ENCODE measurements at regions of chr1 and their contacts with region 1.

Region 1: GRCh38 chr1:236699366-236699765 is 13.1 kb downstream of the ACTN2 start:
- DNase-seq: no peak
- H3K4me3 ChIP-seq: no peak overlapping the region
- H3K27me3 ChIP-seq: no peaks in the 10 kb centered on the region
- CTCF ChIP-seq: no peak

Region 2: DNA sequence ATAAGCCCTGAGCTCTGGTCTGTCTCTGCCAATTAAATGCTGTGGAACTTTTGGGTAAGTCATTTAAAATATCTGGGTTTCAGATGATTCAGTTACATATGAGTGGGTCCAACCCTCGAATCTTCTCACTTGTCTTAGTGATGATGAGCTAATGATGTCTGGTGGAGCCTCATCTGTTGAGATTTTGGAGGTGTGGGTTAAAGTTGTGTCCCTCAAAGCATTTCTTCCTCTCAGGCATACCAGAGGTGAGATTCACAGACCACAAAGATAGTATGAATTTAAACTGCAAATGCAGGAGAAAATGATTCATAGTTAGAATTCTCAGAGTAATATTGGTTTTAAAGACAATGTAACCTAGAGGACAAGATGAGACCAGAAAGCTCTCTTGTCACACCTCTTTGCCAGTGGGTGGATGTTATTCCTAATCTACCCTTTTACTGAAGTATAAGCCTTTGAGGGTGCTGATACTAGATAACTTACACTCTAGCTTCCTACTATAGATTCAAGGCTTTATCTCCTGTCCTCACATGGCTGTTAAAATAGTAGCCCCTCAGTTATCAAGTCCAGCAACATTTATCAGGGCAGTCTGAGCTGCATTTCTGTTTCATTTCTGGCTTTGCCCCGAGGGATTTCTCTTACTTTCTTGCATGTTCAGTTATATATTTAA is 214.1 kb after region 1 on chr1:
- CTCF ChIA-PET with region 1: no interaction called
- POLR2A ChIA-PET with region 1: interaction called, 13 read pairs
- DNase-seq: no peak
- H3K4me3 ChIP-seq: no peak overlapping the region
- H3K27me3 ChIP-seq: no peaks in the 10 kb centered on the region
- CTCF ChIP-seq: no peak